ENCODE measurements at regions of chr16 and their contacts with region 1.

Region 1: DNA sequence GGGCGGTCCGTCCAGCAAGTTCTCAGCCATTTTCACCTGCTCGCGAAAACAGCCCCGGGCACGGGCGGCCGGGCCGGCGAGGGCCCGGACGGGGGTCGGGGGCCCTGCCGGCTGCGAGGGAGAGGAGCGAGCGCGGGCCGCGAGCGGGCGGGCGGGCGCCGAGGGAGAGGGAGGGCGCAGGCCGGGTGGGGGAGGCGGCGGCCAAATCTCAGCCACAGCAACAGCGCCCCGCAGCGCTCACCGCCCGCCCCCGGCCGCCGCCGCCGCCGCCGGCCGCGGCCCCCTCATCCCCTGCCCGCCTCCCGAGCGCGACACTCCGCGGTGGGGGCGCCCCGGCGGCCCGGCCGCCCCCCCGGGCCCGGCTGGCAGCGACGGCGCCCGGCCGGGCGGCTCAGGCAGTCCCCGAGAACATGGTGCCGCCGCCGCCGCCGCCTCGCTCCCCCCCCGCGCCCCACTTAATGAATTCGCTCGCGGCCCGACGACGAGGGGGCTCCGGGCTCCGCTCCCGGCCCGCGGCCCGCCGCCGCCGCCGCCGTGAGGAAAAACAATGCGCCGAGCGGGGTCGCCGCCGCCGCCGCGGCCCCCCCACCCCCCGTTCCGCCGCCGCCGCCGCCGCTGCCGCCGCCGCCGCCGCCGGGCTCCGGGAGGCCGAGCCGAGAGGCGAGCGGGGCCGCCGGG is 487 bp downstream of the CREBBP start:
- DNase-seq: peak; percentile 55 to 77
- H3K4me3 ChIP-seq: peak overlapping the region; percentile 95
- H3K4me3 Mint-ChIP-seq: peak overlapping the region; percentile 84
- H3K27ac Mint-ChIP-seq: no peak overlapping the region
- H3K4me1 ChIP-seq: peaks cover 5% of the 10 kb centered on the region; the same call in 1 of the 2 replicates
- H3K4me1 Mint-ChIP-seq: no peaks in the 10 kb centered on the region
- H3K27me3 ChIP-seq: no peaks in the 10 kb centered on the region
- H3K27me3 Mint-ChIP-seq: no peaks in the 10 kb centered on the region
- CTCF ChIP-seq: no peak

Region 2: DNA sequence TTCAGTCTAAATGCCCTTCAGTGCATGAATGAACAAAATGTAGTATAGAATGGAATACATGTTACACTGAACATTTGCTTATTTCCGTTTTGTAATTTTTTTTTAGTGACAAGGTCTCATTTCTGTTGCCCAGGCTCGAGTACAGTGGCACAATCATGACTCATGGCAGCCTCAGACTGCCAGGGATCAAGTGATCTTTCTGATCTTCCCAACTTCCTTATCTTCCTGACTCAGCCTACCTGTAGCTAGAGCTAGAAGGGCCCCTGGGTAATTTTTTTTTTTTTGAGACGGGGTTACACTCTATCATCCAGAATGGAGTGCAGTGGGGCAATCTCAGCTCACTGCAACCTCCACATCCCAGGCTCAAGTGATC is 261.3 kb before region 1 on chr16:
- CTCF ChIA-PET with region 1: no interaction called
- POLR2A ChIA-PET with region 1: no interaction called
- intact Hi-C with region 1: no loop called
- DNase-seq: no peak
- H3K4me3 ChIP-seq: no peak overlapping the region
- H3K4me3 Mint-ChIP-seq: no peak overlapping the region
- H3K27ac Mint-ChIP-seq: no peak overlapping the region
- H3K4me1 ChIP-seq: no peaks in the 10 kb centered on the region
- H3K4me1 Mint-ChIP-seq: peaks cover 5% of the 10 kb centered on the region
- H3K27me3 ChIP-seq: no peaks in the 10 kb centered on the region
- H3K27me3 Mint-ChIP-seq: no peaks in the 10 kb centered on the region
- CTCF ChIP-seq: no peak

Region 3: DNA sequence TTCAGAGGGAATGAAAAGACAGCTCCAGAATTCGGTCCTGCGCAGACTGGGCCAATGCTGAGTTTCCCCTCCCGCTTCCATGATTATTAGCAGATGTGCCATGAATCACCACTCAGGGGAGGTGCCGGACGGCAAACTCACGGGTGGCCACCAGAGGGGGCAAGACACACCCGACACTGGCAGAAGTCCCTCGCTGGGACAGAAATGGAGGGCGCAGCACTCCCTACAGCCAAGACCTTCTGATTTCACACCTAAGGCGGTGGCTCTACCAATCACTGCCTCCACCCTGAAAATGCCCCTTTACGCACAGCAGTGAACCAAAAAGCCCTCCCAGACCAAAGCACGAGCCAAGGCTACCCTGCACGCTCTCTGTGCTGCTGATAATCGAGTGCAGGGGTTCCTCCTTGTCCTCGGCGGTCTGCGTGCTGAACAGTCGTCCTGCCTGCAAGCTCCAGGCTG is 189.5 kb before region 1 on chr16:
- CTCF ChIA-PET with region 1: no interaction called
- POLR2A ChIA-PET with region 1: no interaction called
- intact Hi-C with region 1: loop called (anchors 10 kb)
- DNase-seq: peak; percentile 82 to 86
- H3K4me3 ChIP-seq: no peak overlapping the region
- H3K4me3 Mint-ChIP-seq: no peak overlapping the region
- H3K27ac Mint-ChIP-seq: peak overlapping the region; percentile 55
- H3K4me1 ChIP-seq: no peaks in the 10 kb centered on the region
- H3K4me1 Mint-ChIP-seq: peaks cover 3% of the 10 kb centered on the region
- H3K27me3 ChIP-seq: no peaks in the 10 kb centered on the region
- H3K27me3 Mint-ChIP-seq: no peaks in the 10 kb centered on the region
- CTCF ChIP-seq: peak; percentile 80 to 85

Region 4: DNA sequence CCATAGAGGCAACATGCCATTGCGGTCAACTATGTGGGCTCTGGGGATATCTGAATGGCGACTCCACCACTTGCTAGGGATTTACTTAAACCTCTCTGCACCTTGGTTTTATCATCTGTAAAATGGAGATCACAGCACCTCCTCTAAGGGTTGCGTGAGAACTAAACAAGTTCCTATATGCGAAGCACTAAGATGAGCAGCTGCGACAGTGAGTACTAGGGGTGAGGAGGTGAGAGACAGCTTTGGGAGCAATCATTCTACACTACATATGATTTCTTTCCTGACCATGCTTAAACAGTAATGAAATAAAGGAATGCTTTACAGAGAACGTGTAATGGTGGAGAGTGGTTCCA is 60.9 kb before region 1 on chr16:
- CTCF ChIA-PET with region 1: no interaction called
- POLR2A ChIA-PET with region 1: no interaction called
- intact Hi-C with region 1: no loop called
- DNase-seq: no peak
- H3K4me3 ChIP-seq: no peak overlapping the region
- H3K4me3 Mint-ChIP-seq: no peak overlapping the region
- H3K27ac Mint-ChIP-seq: no peak overlapping the region
- H3K4me1 ChIP-seq: no peaks in the 10 kb centered on the region
- H3K4me1 Mint-ChIP-seq: no peaks in the 10 kb centered on the region
- H3K27me3 ChIP-seq: no peaks in the 10 kb centered on the region
- H3K27me3 Mint-ChIP-seq: no peaks in the 10 kb centered on the region
- CTCF ChIP-seq: no peak

Region 5: GRCh38 chr16:3829631-3830536 is 50.1 kb before region 1 on chr16:
- CTCF ChIA-PET with region 1: no interaction called
- POLR2A ChIA-PET with region 1: no interaction called
- intact Hi-C with region 1: no loop called
- DNase-seq: no peak
- H3K4me3 ChIP-seq: no peak overlapping the region
- H3K4me3 Mint-ChIP-seq: no peak overlapping the region
- H3K27ac Mint-ChIP-seq: no peak overlapping the region
- H3K4me1 ChIP-seq: no peaks in the 10 kb centered on the region
- H3K4me1 Mint-ChIP-seq: peaks cover 9% of the 10 kb centered on the region
- H3K27me3 ChIP-seq: no peaks in the 10 kb centered on the region
- H3K27me3 Mint-ChIP-seq: no peaks in the 10 kb centered on the region
- CTCF ChIP-seq: no peak